ENCODE measurements at regions of chr1 and their contacts with region 1.

Region 1: DNA sequence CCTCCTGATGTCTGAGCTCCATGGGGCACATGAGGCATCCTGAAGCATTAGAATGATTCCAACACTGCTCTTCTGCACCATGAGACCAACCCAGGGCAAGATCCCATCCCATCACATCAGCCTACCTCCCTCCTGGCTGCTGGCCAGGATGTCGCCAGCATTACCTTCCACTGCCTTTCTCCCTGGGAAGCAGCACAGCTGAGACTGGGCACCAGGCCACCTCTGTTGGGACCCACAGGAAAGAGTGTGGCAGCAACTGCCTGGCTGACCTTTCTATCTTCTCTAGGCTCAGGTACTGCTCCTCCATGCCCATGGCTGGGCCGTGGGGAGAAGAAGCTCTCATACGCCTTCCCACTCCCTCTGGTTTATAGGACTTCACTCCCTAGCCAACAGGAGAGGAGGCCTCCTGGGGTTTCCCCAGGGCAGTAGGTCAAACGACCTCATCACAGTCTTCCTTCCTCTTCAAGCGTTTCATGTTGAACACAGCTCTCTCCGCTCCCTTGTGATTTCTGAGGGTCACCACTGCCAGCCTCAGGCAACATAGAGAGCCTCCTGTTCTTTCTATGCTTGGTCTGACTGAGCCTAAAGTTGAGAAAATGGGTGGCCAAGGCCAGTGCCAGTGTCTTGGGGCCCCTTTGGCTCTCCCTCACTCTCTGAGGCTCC is 11.1 kb upstream of the RASSF5 start:
- DNase-seq: no peak
- ATAC-seq: peak; percentile 88
- H3K4me3 ChIP-seq: peak overlapping the region; percentile 34; the same call in 1 of the 2 replicates
- H3K27ac ChIP-seq: peak overlapping the region; percentile 90
- H3K4me1 ChIP-seq: peaks cover 39% of the 10 kb centered on the region
- H3K27me3 ChIP-seq: no peaks in the 10 kb centered on the region
- CTCF ChIP-seq: no peak
- EP300 ChIP-seq: 0 out of 4 replicates have a peak, but pooled peaks of 1 of the 2 experiments have one; percentile 29
- POLR2A ChIP-seq: no peak
- RAD21 ChIP-seq: no peak

Region 2: DNA sequence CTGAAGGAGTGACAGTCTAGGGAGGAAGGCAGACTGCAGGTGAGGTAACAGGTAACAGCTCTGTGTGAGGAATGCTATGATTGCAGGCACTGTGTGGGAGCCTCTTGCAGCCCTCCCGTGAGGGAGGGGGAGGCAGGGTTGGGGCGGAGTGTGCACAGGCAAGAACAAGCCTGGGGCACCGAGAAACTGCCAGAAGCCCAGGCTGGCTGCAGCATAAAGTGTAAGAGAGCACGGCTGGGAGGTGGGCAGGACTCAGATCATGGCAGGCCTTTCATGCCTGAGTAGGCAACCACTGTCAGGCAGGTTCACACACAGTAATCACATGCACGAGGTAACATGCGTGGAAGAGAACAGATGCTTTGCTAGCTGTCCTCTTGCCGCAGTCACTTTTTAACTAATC is 454.6 kb before region 1 on chr1:
- CTCF ChIA-PET with region 1: no interaction called
- POLR2A ChIA-PET with region 1: no interaction called
- RAD21 ChIA-PET with region 1: no interaction called
- SMC1A ChIA-PET with region 1: no interaction called
- in situ Hi-C with region 1: no loop called
- intact Hi-C with region 1: no loop called
- DNase-seq: no peak
- ATAC-seq: peak; percentile 84
- H3K4me3 ChIP-seq: no peak overlapping the region
- H3K27ac ChIP-seq: peak overlapping the region; percentile 35
- H3K4me1 ChIP-seq: peaks cover 48% of the 10 kb centered on the region
- H3K27me3 ChIP-seq: no peaks in the 10 kb centered on the region; a peak in 1 of 4 replicates
- CTCF ChIP-seq: no peak
- EP300 ChIP-seq: no peak
- POLR2A ChIP-seq: no peak
- RAD21 ChIP-seq: no peak

Region 3: GRCh38 chr1:206461602-206462455 is 34.4 kb before region 1 on chr1:
- CTCF ChIA-PET with region 1: interaction called, 22 read pairs
- POLR2A ChIA-PET with region 1: interaction called, 3 read pairs
- RAD21 ChIA-PET with region 1: interaction called, 12 read pairs
- SMC1A ChIA-PET with region 1: interaction called, 11 read pairs
- in situ Hi-C with region 1: no loop called
- intact Hi-C with region 1: no loop called
- DNase-seq: no peak
- ATAC-seq: peak; percentile 90
- H3K4me3 ChIP-seq: no peak overlapping the region
- H3K27ac ChIP-seq: no peak overlapping the region
- H3K4me1 ChIP-seq: peaks cover 23% of the 10 kb centered on the region
- H3K27me3 ChIP-seq: no peaks in the 10 kb centered on the region
- CTCF ChIP-seq: peak; percentile 76 to 86 (median 84)
- EP300 ChIP-seq: no peak
- POLR2A ChIP-seq: no peak
- RAD21 ChIP-seq: peak; percentile 73

Region 4: GRCh38 chr1:206507284-206508129 is 11.2 kb after region 1 on chr1 and contains the start of gene RASSF5:
- CTCF ChIA-PET with region 1: interaction called, 62 read pairs
- POLR2A ChIA-PET with region 1: interaction called, 60 read pairs
- RAD21 ChIA-PET with region 1: interaction called, 69 read pairs
- SMC1A ChIA-PET with region 1: interaction called, 61 read pairs
- in situ Hi-C with region 1: no loop called
- intact Hi-C with region 1: no loop called
- DNase-seq: no peak
- ATAC-seq: peak; percentile 78
- H3K4me3 ChIP-seq: peak within 1 kb of the TSS; percentile 72
- H3K27ac ChIP-seq: peak within 1 kb of the TSS; percentile 29; the same call in 1 of the 2 replicates
- H3K4me1 ChIP-seq: peaks cover 41% of the 10 kb centered on the region
- H3K27me3 ChIP-seq: no peaks in the 10 kb centered on the region
- CTCF ChIP-seq: no peak
- EP300 ChIP-seq: 0 out of 4 replicates have a peak, but pooled peaks of 1 of the 2 experiments have one; percentile 21
- POLR2A ChIP-seq: peak; percentile 83
- RAD21 ChIP-seq: no peak
- polyA plus RNA-seq, gene RASSF5: 14.0 to 25.4 TPM

Region 5: GRCh38 chr1:206513312-206514111 is 17.2 kb after region 1 on chr1:
- CTCF ChIA-PET with region 1: interaction called, 7 read pairs
- POLR2A ChIA-PET with region 1: interaction called, 8 read pairs
- RAD21 ChIA-PET with region 1: interaction called, 8 read pairs
- SMC1A ChIA-PET with region 1: interaction called, 15 read pairs
- in situ Hi-C with region 1: no loop called
- intact Hi-C with region 1: no loop called
- DNase-seq: no peak
- ATAC-seq: no peak
- H3K4me3 ChIP-seq: no peak overlapping the region
- H3K27ac ChIP-seq: no peak overlapping the region
- H3K4me1 ChIP-seq: peaks cover 7% of the 10 kb centered on the region; the same call in 1 of the 2 replicates
- H3K27me3 ChIP-seq: no peaks in the 10 kb centered on the region
- CTCF ChIP-seq: no peak
- EP300 ChIP-seq: no peak
- POLR2A ChIP-seq: no peak
- RAD21 ChIP-seq: no peak

Region 6: GRCh38 chr1:206529425-206529824 is 33.2 kb after region 1 on chr1:
- CTCF ChIA-PET with region 1: no interaction called
- POLR2A ChIA-PET with region 1: no interaction called
- RAD21 ChIA-PET with region 1: no interaction called
- SMC1A ChIA-PET with region 1: no interaction called
- in situ Hi-C with region 1: no loop called
- intact Hi-C with region 1: no loop called
- DNase-seq: no peak
- ATAC-seq: no peak
- H3K4me3 ChIP-seq: no peak overlapping the region
- H3K27ac ChIP-seq: no peak overlapping the region
- H3K4me1 ChIP-seq: no peaks in the 10 kb centered on the region
- H3K27me3 ChIP-seq: no peaks in the 10 kb centered on the region
- CTCF ChIP-seq: no peak
- EP300 ChIP-seq: no peak
- POLR2A ChIP-seq: no peak
- RAD21 ChIP-seq: no peak

Measured in GM12878 (cell line).